Right lobe of liver (tissue), 6 donors: ENCODE measurements at regions of chr17 and their contacts with region 1.

Region 1: GRCh38 chr17:31558748-31559644 is 167.5 kb downstream of the RAB11FIP4 start:
- DNase-seq: peak; percentile 84 to 87 (median 87)
- ATAC-seq: peak; percentile 65 to 82 (median 72)
- H3K4me3 ChIP-seq: peak overlapping the region; percentile 67 to 83 (median 77)
- H3K27ac ChIP-seq: peak overlapping the region; percentile 93 to 96 (median 96)
- H3K4me1 ChIP-seq: peaks cover 0 to 35% (median 7%) of the 10 kb centered on the region in 4 donors
- H3K27me3 ChIP-seq: no peaks in the 10 kb centered on the region
- CTCF ChIP-seq: peak; percentile 90 to 91 (median 91)
- POLR2A ChIP-seq: peak; percentile 84

Region 2: DNA sequence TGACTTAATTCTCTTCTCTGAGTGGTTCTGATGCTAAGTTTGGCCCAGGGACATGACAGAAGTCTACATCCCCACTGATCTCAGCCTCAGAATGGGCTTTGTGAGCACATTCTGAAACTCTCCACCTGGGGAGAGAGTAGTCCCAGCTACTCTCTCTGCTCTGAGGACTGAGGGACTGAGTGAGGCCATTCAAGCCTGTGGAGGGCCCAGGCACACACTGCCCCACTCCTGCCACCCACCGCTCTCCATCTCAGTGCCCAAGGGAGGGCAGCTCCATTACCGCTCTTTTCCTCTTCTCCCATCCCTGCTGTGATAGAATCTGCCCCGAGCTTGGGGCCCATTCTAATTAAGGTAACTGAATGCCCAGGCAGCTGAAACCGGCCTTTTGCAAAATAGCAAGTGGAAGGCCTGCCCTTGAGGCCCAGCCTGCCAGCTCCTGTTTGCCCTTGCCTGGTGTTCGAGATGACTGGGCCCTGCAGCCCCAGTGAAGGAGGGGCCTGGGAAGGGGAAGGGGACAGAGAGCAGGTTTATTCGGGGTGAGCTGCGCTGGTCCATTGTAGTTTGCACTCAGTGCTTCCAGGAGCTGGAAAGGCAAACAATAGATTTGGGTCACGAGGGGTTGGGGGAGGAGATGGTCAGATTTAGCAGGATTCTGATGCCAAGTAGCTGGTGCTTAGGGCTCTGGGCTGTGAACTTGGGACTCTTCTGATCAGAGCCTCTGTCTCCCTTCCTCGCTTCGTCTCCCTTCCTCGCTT is 91.3 kb before region 1 on chr17:
- intact Hi-C with region 1: no loop called
- DNase-seq: peak in 2 of 3 donors; percentile 76 to 83
- ATAC-seq: peak; percentile 75 to 96 (median 92)
- H3K4me3 ChIP-seq: no peak overlapping the region
- H3K27ac ChIP-seq: peak overlapping the region in 2 of 3 donors; percentile 35 to 49
- H3K4me1 ChIP-seq: peaks cover 0 to 14% (median 7%) of the 10 kb centered on the region in 4 donors
- H3K27me3 ChIP-seq: no peaks in the 10 kb centered on the region
- CTCF ChIP-seq: no peak
- POLR2A ChIP-seq: no peak

Region 3: GRCh38 chr17:31524926-31525800 is 33.8 kb before region 1 on chr17:
- intact Hi-C with region 1: no loop called
- DNase-seq: peak; percentile 90 to 92 (median 92)
- ATAC-seq: peak; percentile 82 to 94 (median 87)
- H3K4me3 ChIP-seq: no peak overlapping the region
- H3K27ac ChIP-seq: peak overlapping the region in 2 of 3 donors; percentile 21 to 43
- H3K4me1 ChIP-seq: peaks cover 0 to 17% (median 6%) of the 10 kb centered on the region in 4 donors
- H3K27me3 ChIP-seq: no peaks in the 10 kb centered on the region
- CTCF ChIP-seq: peak; percentile 94 to 97 (median 96)
- POLR2A ChIP-seq: no peak

Region 4: DNA sequence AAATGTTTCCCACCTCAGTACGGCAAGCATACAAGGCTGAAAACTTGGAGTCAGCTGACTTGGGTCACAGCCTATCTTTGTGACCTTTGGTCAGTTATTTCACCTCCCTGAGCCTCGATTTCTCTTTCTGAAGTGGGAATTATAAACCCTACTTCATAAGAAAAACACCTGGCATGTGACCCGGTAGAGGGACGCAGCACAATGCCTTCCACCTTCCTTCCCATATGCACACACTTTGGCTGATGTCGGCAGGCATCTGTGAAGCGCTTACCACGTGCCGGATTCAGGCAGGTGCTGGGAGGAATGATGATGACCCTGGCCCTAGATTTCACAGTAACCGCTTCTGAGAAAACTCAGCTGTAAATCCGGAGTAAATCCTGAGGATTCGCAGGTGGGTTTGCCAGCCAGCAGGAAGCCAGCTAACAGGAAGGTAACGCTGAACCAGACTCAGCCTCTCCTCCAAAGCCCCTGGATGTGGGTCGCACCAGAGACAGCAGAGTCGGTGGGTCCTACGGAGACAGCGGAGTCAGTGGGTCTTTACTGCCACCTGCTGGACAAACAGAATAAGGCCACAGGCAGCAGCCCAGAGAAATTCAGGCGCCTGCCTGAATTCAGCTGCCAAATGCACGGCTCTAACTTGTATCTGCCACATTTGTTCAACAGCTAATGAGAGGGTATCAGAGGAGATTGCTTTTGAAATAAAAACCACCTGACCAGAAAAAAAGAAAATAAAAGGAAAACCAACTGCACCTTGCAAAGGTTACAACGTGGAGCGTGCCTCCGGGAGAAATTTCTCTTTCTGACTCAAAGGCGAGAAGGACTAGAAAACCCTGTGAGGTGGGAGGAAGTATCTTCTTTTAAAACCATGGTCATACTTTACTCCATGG is 283.4 kb after region 1 on chr17:
- intact Hi-C with region 1: loop called (anchors 5 to 10 kb)
- DNase-seq: peak; percentile 65 to 82 (median 74)
- ATAC-seq: peak; percentile 91 to 94 (median 93)
- H3K4me3 ChIP-seq: peak overlapping the region; percentile 11 to 45 (median 35)
- H3K27ac ChIP-seq: peak overlapping the region; percentile 24 to 75 (median 66)
- H3K4me1 ChIP-seq: peaks cover 0 to 11% (median 5%) of the 10 kb centered on the region in 4 donors
- H3K27me3 ChIP-seq: no peaks in the 10 kb centered on the region
- CTCF ChIP-seq: peak; percentile 96 to 99 (median 96)
- POLR2A ChIP-seq: peak; percentile 21